Dendritic cell treated with granulocyte-macrophage colony-stimulating factor and Interleukin-4, amounts not matched to agents 40 ng/mL and 50 ng/mL, for 4 days (primary cell): ENCODE measurements at regions of chr1 and their contacts with region 1.

Region 1: GRCh38 chr1:117534995-117535467 is 70.8 kb upstream of the TENT5C start:
- H3K4me3 Mint-ChIP-seq: no peak overlapping the region
- H3K27ac Mint-ChIP-seq: no peak overlapping the region
- H3K4me1 Mint-ChIP-seq: no peaks in the 10 kb centered on the region
- H3K27me3 Mint-ChIP-seq: no peaks in the 10 kb centered on the region

Region 2: DNA sequence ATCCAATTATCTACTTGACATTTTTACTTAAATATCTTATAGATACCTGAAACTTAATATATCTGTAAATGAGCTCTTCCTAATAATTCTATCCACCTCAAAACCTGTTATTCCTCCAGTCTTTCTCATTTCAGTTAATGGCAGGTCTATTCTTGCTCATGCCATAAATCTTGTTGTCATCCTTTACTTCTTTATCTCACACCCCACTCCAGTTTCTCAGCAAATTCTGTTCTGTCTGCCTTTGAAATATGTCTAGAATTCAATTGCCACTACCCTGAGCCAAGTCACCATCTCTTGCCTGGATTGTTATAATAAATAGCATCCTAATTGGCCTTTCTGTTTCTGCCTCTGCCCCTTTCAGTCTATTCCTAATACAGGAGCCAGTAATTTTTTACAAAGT is 62.0 kb before region 1 on chr1:
- intact Hi-C with region 1: loop called (anchors 10 kb)
- H3K4me3 Mint-ChIP-seq: no peak overlapping the region
- H3K27ac Mint-ChIP-seq: no peak overlapping the region
- H3K4me1 Mint-ChIP-seq: no peaks in the 10 kb centered on the region
- H3K27me3 Mint-ChIP-seq: no peaks in the 10 kb centered on the region

Region 3: DNA sequence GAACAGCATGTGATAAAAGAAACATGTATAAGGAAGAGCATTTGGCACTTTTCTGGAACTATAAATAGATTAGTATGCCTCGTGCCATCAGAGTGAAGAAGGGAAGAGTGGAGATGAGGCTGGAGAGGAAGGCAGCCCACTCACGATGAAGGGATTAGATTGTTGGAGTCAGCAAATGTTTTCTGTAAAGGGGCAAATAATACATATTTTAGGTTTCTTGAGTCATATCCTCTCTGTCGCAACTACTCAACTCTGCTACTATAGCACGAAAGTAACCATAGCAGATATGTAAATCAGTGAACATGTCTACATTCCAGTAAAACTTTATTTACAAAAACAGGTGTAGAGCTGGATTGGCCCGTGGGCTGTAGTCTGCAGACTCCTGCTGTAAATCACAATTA is 218.6 kb after region 1 on chr1:
- intact Hi-C with region 1: loop called (anchors 1 kb)
- H3K4me3 Mint-ChIP-seq: no peak overlapping the region
- H3K27ac Mint-ChIP-seq: no peak overlapping the region
- H3K4me1 Mint-ChIP-seq: peaks cover 11% of the 10 kb centered on the region
- H3K27me3 Mint-ChIP-seq: peaks cover 12% of the 10 kb centered on the region

Region 4: GRCh38 chr1:118381197-118381869 is 846.3 kb after region 1 on chr1:
- intact Hi-C with region 1: no loop called
- H3K4me3 Mint-ChIP-seq: no peak overlapping the region
- H3K27ac Mint-ChIP-seq: no peak overlapping the region
- H3K4me1 Mint-ChIP-seq: no peaks in the 10 kb centered on the region
- H3K27me3 Mint-ChIP-seq: no peaks in the 10 kb centered on the region